BJ (cell line): ENCODE measurements at regions of chr1 and their contacts with region 1.

Region 1: DNA sequence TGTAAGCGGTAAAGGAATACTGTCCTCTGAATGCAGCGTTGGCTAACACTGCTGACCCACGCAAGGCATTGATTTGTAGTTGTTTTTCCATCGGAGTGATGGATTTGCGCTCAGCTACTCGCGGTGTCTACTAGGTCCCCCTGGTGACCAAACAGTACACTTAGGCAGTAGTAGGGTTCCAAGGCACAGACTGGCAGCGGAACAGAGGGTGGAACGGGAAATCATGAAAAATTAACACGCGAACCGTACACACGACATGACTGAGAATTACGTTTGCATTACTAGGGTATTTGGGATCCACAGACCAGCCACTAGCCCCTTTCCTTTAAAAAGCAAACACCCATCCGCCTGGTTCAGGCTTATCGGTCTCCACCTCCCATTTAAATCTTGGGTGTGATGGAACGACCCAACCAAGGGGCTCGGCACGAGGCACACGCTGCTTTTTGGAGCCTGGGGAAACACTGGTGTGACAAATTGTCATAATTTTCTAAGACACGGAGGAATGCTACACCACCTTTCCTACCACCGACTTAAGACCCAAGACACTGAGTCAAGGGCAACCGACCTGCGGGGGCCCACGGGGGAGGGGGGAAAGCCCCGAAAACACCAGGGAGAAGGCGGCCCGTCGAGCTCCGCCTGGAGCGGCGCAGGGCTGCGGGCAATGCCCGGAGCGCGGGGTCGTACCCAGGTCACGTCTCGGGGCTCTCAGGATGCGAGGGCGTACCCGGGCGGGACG is 699 bp downstream of the DIPK1A start:
- DNase-seq: peak; percentile 38
- H3K4me3 ChIP-seq: peak overlapping the region; percentile 84
- H3K27me3 ChIP-seq: no peaks in the 10 kb centered on the region
- CTCF ChIP-seq: peak; percentile 78

Region 2: GRCh38 chr1:92749024-92749634 is 211.4 kb before region 1 on chr1:
- CTCF ChIA-PET with region 1: no interaction called
- POLR2A ChIA-PET with region 1: no interaction called
- DNase-seq: no peak
- H3K4me3 ChIP-seq: no peak overlapping the region
- H3K27me3 ChIP-seq: no peaks in the 10 kb centered on the region
- CTCF ChIP-seq: peak; percentile 81

Region 3: DNA sequence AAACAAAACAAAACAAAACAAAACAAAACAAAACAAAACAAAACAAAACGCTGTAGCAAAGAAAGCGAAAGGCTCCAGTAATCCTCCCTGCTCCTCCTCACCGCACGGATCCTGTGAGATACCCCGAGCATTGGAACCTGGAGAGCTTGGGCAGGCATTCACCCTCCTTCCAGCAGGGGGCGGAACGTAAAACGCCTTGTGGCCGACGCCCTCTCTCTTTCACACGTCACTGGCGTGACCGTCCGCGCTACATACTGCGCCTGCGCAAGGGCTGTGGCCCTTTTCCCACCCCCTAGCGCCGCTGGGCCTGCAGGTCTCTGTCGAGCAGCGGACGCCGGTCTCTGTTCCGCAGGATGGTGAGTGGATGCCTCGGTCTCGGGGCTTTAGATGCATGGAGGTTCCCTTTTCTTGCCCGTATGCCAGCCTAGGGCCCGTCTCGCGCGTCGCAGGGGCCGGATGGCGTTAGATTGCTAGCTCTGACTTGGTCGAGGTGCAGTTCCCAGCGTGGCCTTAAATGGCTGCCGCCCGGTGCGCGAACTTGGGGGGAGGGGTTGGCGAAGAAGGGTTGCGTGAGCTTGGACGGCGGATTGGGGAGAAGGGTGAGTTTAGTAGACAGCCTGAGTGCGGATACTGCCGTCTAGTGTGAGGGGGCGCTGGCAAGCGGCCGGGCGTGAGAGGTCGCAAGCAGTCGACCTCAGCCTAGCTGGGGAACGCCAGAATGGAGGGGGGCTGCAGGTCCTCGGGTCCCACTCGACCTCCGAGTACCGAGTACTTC is 128.6 kb before region 1 on chr1 and contains the start of gene RPL5:
- CTCF ChIA-PET with region 1: interaction called, 11 read pairs
- POLR2A ChIA-PET with region 1: no interaction called
- DNase-seq: peak; percentile 82
- H3K4me3 ChIP-seq: peak within 1 kb of the TSS; percentile 62
- H3K27me3 ChIP-seq: no peaks in the 10 kb centered on the region
- CTCF ChIP-seq: peak; percentile 97
- polyA plus RNA-seq, gene RPL5: 1,389 and 2,073 TPM in 2 replicates

Region 4: GRCh38 chr1:92858564-92859399 is 101.8 kb before region 1 on chr1:
- CTCF ChIA-PET with region 1: interaction called, 134 read pairs
- POLR2A ChIA-PET with region 1: no interaction called
- DNase-seq: peak; percentile 36
- H3K4me3 ChIP-seq: no peak overlapping the region
- H3K27me3 ChIP-seq: no peaks in the 10 kb centered on the region
- CTCF ChIP-seq: peak; percentile 82

Region 5: GRCh38 chr1:92936865-92937264 is 23.7 kb before region 1 on chr1:
- CTCF ChIA-PET with region 1: interaction called, 10 read pairs
- POLR2A ChIA-PET with region 1: interaction called, 5 read pairs
- DNase-seq: no peak
- H3K4me3 ChIP-seq: no peak overlapping the region
- H3K27me3 ChIP-seq: no peaks in the 10 kb centered on the region
- CTCF ChIP-seq: no peak

Region 6: GRCh38 chr1:92948071-92948470 is 12.5 kb before region 1 on chr1:
- CTCF ChIA-PET with region 1: interaction called, 14 read pairs
- POLR2A ChIA-PET with region 1: no interaction called
- DNase-seq: no peak
- H3K4me3 ChIP-seq: no peak overlapping the region
- H3K27me3 ChIP-seq: no peaks in the 10 kb centered on the region
- CTCF ChIP-seq: no peak

Region 7: DNA sequence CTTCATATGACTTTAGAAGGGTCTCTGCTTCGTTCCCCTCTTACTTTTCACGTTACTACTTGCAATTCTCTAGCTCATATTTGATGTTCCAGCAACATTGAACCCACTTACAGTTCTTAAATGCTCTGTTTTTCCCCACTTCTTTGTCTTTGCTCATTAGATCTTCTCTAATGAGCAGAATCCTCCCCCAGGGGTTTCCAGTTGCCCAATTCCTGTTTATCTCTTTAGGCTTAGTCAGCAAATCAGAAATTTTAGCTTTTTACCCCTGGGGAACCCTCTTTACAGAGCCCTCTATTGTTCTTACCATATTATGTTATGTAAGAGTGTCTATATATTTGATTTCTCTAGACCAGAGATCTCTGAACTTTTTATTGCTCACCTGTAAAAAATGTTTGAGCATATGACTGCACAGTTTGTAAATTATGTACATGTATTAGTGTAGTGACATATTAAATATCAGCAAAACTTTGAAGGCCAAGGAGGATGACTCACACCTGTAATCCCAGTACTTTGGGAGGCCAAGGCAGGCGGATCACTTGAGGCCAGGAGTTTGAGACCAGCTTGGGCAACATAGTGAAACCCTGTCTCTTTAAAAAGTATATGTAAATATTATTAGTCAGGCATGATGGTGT is 558.7 kb after region 1 on chr1:
- CTCF ChIA-PET with region 1: no interaction called
- POLR2A ChIA-PET with region 1: interaction called, 11 read pairs
- DNase-seq: no peak
- H3K4me3 ChIP-seq: no peak overlapping the region
- H3K27me3 ChIP-seq: no peaks in the 10 kb centered on the region
- CTCF ChIP-seq: no peak